ENCODE measurements at regions of chr11 and their contacts with region 1.

Region 1: DNA sequence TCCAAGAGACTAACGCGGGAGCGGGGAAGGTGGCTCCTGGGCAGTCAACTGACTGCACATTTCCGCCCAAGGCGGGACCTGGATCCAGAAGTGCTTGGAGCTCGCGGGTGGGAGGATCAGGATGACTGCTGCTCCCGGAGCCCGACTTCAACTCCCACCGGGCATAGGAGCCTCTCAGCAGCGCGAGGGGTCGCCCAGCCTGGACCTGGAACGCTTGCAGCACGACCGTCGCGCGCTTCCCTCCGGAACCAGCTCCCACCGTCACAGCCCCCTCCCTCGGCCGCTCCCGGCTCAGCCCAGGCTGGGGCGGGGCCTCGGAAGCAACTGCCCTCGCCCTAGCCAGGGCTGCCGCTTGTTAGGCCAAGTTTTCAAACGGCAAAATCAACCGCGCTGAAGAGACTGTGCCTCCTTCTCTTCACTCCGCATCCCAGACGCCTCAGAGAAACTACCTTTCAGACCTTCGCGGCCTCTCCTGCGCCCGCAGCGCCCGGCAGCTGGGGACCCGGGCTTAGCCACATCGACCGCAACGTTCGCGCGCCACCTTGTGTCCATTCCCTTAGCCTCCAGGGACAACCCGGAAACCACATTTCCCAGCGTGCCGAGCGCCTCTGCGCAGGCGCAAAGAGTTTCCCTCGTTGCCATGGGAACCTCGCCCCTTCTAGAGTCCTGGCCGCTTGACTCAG is 14.0 kb downstream of the SSH3 start:
- DNase-seq: peak; percentile 91 to 93
- ATAC-seq: peak; percentile 93 to 95
- H3K4me3 ChIP-seq: peak overlapping the region; percentile 78 to 96 (median 88)
- H3K27ac ChIP-seq: peak overlapping the region; percentile 88 to 92 (median 90)
- H3K4me1 ChIP-seq: peaks cover 7 to 17% of the 10 kb centered on the region in 2 donors
- H3K27me3 ChIP-seq: no peaks in the 10 kb centered on the region
- CTCF ChIP-seq: peak; percentile 97 to 100 (median 99)
- POLR2A ChIP-seq: peak; percentile 48 to 61

Region 2: GRCh38 chr11:66958232-66958955 is 359.0 kb before region 1 on chr11 and contains the start of gene PC:
- in situ Hi-C with region 1: no loop called
- intact Hi-C with region 1: no loop called
- DNase-seq: peak; percentile 100
- ATAC-seq: peak; percentile 96 to 97
- H3K4me3 ChIP-seq: peak within 1 kb of the TSS; percentile 59 to 82 (median 62)
- H3K27ac ChIP-seq: peak within 1 kb of the TSS; percentile 83 to 91 (median 87)
- H3K4me1 ChIP-seq: peaks cover 5 to 22% of the 10 kb centered on the region in 2 donors
- H3K27me3 ChIP-seq: no peaks in the 10 kb centered on the region
- CTCF ChIP-seq: no peak
- POLR2A ChIP-seq: peak; percentile 90 to 95
- total RNA-seq, gene PC: 13.1 to 67.6 (median 32.1) TPM

Region 3: DNA sequence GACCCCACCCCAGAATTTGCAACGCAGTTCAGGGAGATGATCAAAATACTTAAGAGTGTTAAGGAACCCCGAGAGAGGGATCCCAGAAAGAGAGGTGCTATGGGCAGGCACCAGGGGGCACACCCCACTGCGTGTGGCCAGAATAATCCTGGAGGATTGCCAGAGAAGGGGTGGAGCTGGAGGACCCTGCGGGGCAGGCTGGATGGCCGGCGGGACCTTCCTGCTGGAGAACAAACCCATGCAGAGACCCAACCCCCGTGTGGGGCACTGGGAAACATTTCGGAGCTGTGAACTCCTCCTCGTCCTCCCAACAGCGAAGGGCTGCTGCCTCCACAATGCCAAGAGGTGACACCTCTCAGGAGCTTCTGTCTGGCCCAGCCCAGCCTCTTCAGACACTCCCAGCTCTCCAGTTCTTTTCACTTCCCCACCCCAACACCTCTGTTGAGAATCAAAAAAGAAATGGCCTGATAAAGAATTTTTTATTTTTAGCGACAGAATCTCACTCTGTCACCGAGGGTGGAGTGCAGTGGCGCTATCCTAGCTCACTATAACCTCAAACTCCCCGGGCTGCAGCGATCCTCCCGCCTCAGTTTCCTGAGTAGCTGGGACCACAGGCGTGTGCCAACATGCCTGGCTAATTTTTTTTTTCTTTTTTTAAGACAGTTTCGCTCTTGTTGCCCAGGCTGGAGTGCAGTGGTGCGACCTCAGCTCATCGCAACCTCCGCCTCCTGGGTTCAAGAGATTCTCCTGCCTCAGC is 235.1 kb before region 1 on chr11:
- in situ Hi-C with region 1: no loop called
- intact Hi-C with region 1: loop called (anchors 2 kb)
- DNase-seq: no peak
- ATAC-seq: peak in 1 of 2 donors; percentile 6
- H3K4me3 ChIP-seq: no peak overlapping the region
- H3K27ac ChIP-seq: no peak overlapping the region
- H3K4me1 ChIP-seq: no peaks in the 10 kb centered on the region
- H3K27me3 ChIP-seq: no peaks in the 10 kb centered on the region
- CTCF ChIP-seq: no peak
- POLR2A ChIP-seq: no peak

Region 4: DNA sequence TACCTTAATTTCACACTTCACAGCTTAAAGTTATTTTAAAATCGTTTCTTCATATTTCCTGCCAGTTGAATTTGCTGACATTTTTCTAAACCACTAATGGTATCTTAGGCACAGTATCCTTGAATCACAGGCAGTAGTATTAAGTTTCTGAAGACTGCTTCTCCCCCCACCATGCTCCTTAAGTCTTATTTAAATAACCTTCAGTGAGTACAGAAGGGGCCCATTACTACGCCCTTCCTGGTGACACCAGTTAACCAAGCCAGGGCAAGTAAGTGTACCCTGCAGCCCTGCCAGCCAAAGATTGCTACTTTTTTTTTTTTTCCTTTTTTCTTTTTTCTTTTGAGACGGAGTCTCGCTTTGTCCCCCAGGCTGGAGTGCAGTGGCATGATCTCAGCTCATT is 178.4 kb before region 1 on chr11:
- in situ Hi-C with region 1: no loop called
- intact Hi-C with region 1: no loop called
- DNase-seq: no peak
- ATAC-seq: no peak
- H3K4me3 ChIP-seq: no peak overlapping the region
- H3K27ac ChIP-seq: no peak overlapping the region
- H3K4me1 ChIP-seq: no peaks in the 10 kb centered on the region
- H3K27me3 ChIP-seq: no peaks in the 10 kb centered on the region
- CTCF ChIP-seq: no peak
- POLR2A ChIP-seq: no peak

Region 5: DNA sequence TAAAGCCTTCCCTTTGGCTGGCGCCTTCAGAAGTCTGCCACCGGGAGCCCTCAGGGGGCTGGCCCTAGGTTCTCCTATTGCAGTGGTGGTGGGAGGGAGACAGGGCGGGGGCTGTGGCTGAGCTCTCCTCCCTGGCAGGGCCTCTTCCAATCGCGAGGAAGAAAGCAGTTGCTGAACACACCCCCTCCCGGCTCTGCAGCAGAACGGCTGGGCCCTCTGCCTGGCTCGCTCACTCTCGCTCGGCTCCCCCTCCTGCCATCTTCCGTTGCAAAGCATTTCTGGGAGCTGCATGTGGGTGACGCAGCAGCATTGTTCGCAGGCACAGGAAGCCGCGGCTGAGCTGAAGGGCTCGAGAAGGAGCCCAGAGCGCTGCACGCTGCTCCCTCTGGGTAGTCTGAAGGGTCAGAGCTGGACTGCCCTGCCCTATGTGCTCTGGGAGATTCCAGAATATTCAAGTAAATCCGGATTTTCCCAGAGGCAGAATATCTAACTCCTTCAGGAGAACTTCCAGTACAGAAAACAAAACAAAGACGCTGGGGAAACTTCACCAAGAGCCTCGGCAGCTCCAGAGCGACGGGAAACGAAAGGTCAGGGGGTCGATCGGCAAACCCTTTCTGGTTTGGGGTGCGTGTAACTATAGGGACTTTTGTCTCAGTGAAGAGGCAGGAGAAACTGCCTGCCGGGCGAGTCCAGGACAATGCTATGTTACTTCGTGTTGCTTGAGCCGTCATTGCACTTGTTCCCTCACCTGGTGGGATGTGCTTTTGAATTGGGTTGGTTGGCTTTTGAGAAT is 77.4 kb before region 1 on chr11:
- in situ Hi-C with region 1: no loop called
- intact Hi-C with region 1: loop called (anchors 2 kb)
- DNase-seq: peak; percentile 98
- ATAC-seq: peak; percentile 91 to 92
- H3K4me3 ChIP-seq: peak overlapping the region; percentile 63 to 74 (median 68)
- H3K27ac ChIP-seq: peak overlapping the region; percentile 89 to 94 (median 90)
- H3K4me1 ChIP-seq: peaks cover 43 to 46% of the 10 kb centered on the region in 2 donors
- H3K27me3 ChIP-seq: no peaks in the 10 kb centered on the region
- CTCF ChIP-seq: peak in 2 of 5 experiments; percentile 28 to 34
- POLR2A ChIP-seq: peak; percentile 90 to 92

Region 6: DNA sequence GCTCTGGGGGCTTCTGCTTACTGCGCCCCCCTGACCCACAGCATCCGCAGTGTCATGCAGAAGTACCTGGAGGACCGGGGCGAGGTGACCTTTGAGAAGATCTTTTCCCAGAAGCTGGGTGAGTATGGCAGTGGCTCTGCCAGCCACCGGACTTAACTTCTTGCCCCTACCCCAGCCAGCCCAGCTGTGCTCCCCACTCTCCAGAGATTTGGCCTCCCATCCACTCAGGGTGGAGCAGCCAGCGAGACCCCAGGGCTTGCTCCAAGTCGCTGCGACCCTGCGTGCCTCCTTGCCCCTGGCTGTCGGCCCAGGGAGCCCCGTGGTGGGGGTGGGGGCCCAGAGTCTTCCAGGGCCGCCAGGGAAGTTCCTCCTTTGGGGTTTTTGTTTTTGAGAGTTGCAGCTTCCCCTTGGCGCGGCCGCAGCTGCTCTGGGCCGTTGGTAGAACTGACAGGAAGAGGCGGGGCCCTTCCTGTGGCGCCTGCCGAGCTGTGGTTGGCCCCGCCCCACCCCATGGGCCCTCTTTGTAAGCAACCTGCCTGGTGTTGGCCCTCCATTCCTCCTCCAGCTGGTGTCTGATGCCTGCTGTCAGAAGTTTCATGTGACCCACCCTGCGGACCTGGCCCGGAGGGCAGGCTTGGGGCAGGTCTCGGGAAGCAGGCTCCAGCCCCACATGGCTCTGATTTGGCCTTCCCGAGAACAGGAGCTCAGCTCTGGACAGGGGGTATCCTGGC is 40.0 kb before region 1 on chr11:
- in situ Hi-C with region 1: loop called in 1 of 4 experiments (anchors 5 kb)
- intact Hi-C with region 1: no loop called
- DNase-seq: peak; percentile 70 to 85
- ATAC-seq: peak; percentile 81 to 83
- H3K4me3 ChIP-seq: peak overlapping the region; percentile 45 to 59 (median 50)
- H3K27ac ChIP-seq: peak overlapping the region; percentile 79 to 89 (median 87)
- H3K4me1 ChIP-seq: peaks cover 59 to 60% of the 10 kb centered on the region in 2 donors
- H3K27me3 ChIP-seq: no peaks in the 10 kb centered on the region
- CTCF ChIP-seq: no peak
- POLR2A ChIP-seq: peak; percentile 24 to 59

Region 7: GRCh38 chr11:67303132-67303834 is 14.1 kb before region 1 on chr11 and contains the start of gene SSH3:
- in situ Hi-C with region 1: no loop called
- intact Hi-C with region 1: loop called (anchors 2 kb)
- DNase-seq: peak; percentile 68 to 75
- ATAC-seq: peak; percentile 78 to 80
- H3K4me3 ChIP-seq: peak within 1 kb of the TSS; percentile 76 to 94 (median 90)
- H3K27ac ChIP-seq: peak within 1 kb of the TSS; percentile 83 to 89 (median 86)
- H3K4me1 ChIP-seq: peaks cover 20 to 25% of the 10 kb centered on the region in 2 donors
- H3K27me3 ChIP-seq: no peaks in the 10 kb centered on the region
- CTCF ChIP-seq: no peak
- POLR2A ChIP-seq: peak; percentile 60 to 70
- total RNA-seq, gene SSH3: 7.9 to 16.3 (median 11.9) TPM

Region 8: GRCh38 chr11:68251765-68252164 is 934.4 kb after region 1 on chr11:
- in situ Hi-C with region 1: no loop called
- intact Hi-C with region 1: no loop called
- DNase-seq: no peak
- ATAC-seq: no peak
- H3K4me3 ChIP-seq: no peak overlapping the region
- H3K27ac ChIP-seq: no peak overlapping the region
- H3K4me1 ChIP-seq: no peaks in the 10 kb centered on the region
- H3K27me3 ChIP-seq: no peaks in the 10 kb centered on the region
- CTCF ChIP-seq: no peak
- POLR2A ChIP-seq: no peak

Measured in gastrocnemius medialis (tissue), 4 donors.